SK-N-SH (cell line): ENCODE measurements at regions of chr6 and their contacts with region 1.

Region 1: GRCh38 chr6:149431905-149432775 is 32.1 kb downstream of the SUMO4 start:
- DNase-seq: peak; percentile 92
- H3K4me3 ChIP-seq: peak overlapping the region; percentile 7 to 50; a peak in 2 of 4 replicates
- H3K27ac ChIP-seq: no peak overlapping the region
- H3K4me1 ChIP-seq: peaks cover 0 to 2% of the 10 kb centered on the region in 2 experiments; a peak in 1 of 4 replicates
- H3K27me3 ChIP-seq: no peaks in the 10 kb centered on the region
- CTCF ChIP-seq: peak; percentile 85
- EP300 ChIP-seq: no peak
- RAD21 ChIP-seq: peak; percentile 99

Region 2: DNA sequence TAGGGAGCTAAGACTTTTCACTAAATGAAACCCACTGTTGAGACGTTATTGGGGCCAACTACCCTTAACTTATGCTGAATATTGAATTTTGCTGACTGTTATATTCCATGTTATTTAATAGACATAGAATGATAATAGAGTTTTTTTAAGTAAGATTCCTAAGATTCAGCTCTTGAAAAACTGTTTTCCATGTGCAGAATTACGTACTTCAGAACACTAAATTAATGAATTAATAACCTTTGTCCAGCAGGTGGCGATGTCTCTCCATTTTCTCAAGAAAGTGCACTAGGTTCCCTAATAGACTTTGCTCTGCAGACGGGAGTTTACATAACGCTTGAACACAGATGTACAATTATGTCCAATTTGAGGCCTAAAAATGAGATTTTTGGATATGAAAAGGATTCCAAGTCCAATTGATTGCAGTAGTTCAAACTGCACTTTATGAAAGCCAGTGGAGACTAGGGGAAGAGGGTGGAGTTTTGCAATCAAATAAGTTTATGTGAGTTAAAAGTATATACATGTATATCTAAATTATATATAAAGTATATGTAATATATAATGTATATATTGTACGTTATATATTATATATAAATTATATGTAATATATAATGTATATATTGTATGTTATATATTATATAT is 403.3 kb before region 1 on chr6:
- CTCF ChIA-PET with region 1: interaction called, 104 read pairs
- POLR2A ChIA-PET with region 1: no interaction called
- DNase-seq: peak; percentile 67
- H3K4me3 ChIP-seq: no peak overlapping the region; a peak in 1 of 4 replicates
- H3K27ac ChIP-seq: no peak overlapping the region
- H3K4me1 ChIP-seq: peaks cover 11 to 13% of the 10 kb centered on the region in 2 experiments
- H3K27me3 ChIP-seq: no peaks in the 10 kb centered on the region
- CTCF ChIP-seq: peak; percentile 70
- EP300 ChIP-seq: no peak
- RAD21 ChIP-seq: peak; percentile 96

Region 3: GRCh38 chr6:149054559-149055194 is 377.5 kb before region 1 on chr6:
- CTCF ChIA-PET with region 1: interaction called, 12 read pairs
- POLR2A ChIA-PET with region 1: no interaction called
- DNase-seq: no peak
- H3K4me3 ChIP-seq: no peak overlapping the region
- H3K27ac ChIP-seq: no peak overlapping the region
- H3K4me1 ChIP-seq: peaks cover 1 to 3% of the 10 kb centered on the region in 2 experiments; a peak in 1 of 4 replicates
- H3K27me3 ChIP-seq: no peaks in the 10 kb centered on the region
- CTCF ChIP-seq: no peak
- EP300 ChIP-seq: no peak
- RAD21 ChIP-seq: no peak

Region 4: DNA sequence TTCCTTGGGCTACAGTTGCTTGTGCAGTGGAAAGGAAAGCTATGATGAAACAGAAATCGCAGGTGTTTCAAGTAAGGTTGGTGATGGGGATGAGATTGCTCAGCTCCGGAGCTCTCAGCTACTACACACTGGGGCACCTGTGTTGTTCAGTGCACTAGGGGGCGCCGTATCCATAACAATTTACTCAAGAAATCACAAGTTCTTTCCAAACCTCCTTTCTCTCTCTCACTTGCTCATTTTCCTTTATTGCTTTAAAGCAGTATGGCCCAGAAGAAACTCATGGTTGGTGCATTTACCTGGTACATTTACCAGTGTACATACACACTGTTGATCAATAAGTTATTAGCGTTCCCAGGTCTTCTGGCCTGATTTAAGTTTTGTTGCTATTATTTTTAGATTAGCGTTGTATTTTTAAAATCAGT is 349.8 kb before region 1 on chr6:
- CTCF ChIA-PET with region 1: interaction called, 158 read pairs
- POLR2A ChIA-PET with region 1: no interaction called
- DNase-seq: peak; percentile 58
- H3K4me3 ChIP-seq: no peak overlapping the region; a peak in 1 of 4 replicates
- H3K27ac ChIP-seq: no peak overlapping the region
- H3K4me1 ChIP-seq: peaks cover 9 to 22% of the 10 kb centered on the region in 2 experiments
- H3K27me3 ChIP-seq: no peaks in the 10 kb centered on the region
- CTCF ChIP-seq: peak; percentile 76
- EP300 ChIP-seq: no peak; a peak in 1 of 4 replicates
- RAD21 ChIP-seq: peak; percentile 94

Region 5: DNA sequence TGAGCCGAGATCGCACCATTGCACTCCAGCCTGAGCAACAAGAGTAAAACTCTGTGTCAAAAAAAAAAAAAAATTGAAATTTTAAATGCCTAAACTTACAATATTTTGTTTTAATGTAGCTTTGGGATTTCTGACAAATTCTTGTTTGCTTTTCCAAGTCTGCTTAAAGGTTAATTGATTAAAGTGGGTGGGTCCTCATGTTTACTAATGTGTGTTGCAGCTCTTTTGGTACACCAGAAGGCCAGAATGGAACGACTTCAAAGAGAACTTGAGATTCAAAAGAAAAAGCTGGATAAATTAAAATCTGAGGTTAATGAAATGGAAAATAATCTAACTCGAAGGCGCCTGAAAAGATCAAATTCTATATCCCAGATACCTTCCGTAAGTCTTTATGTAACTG is 34.8 kb before region 1 on chr6:
- CTCF ChIA-PET with region 1: interaction called, 12 read pairs
- POLR2A ChIA-PET with region 1: no interaction called
- DNase-seq: no peak
- H3K4me3 ChIP-seq: no peak overlapping the region
- H3K27ac ChIP-seq: no peak overlapping the region
- H3K4me1 ChIP-seq: peaks cover 0 to 5% of the 10 kb centered on the region in 2 experiments; a peak in 2 of 4 replicates
- H3K27me3 ChIP-seq: no peaks in the 10 kb centered on the region
- CTCF ChIP-seq: no peak
- EP300 ChIP-seq: no peak
- RAD21 ChIP-seq: no peak

Region 6: GRCh38 chr6:149513915-149514314 is 81.8 kb after region 1 on chr6:
- CTCF ChIA-PET with region 1: interaction called, 37 read pairs
- POLR2A ChIA-PET with region 1: no interaction called
- DNase-seq: no peak
- H3K4me3 ChIP-seq: no peak overlapping the region
- H3K27ac ChIP-seq: no peak overlapping the region
- H3K4me1 ChIP-seq: peaks cover 0 to 3% of the 10 kb centered on the region in 2 experiments; a peak in 1 of 4 replicates
- H3K27me3 ChIP-seq: no peaks in the 10 kb centered on the region
- CTCF ChIP-seq: no peak
- EP300 ChIP-seq: no peak
- RAD21 ChIP-seq: no peak

Region 7: GRCh38 chr6:149580880-149581279 is 148.7 kb after region 1 on chr6:
- CTCF ChIA-PET with region 1: no interaction called
- POLR2A ChIA-PET with region 1: no interaction called
- DNase-seq: no peak
- H3K4me3 ChIP-seq: no peak overlapping the region
- H3K27ac ChIP-seq: no peak overlapping the region
- H3K4me1 ChIP-seq: no peaks in the 10 kb centered on the region
- H3K27me3 ChIP-seq: no peaks in the 10 kb centered on the region
- CTCF ChIP-seq: no peak
- EP300 ChIP-seq: no peak
- RAD21 ChIP-seq: no peak